ENCODE measurements at regions of chr15 and their contacts with region 1.

Region 1: DNA sequence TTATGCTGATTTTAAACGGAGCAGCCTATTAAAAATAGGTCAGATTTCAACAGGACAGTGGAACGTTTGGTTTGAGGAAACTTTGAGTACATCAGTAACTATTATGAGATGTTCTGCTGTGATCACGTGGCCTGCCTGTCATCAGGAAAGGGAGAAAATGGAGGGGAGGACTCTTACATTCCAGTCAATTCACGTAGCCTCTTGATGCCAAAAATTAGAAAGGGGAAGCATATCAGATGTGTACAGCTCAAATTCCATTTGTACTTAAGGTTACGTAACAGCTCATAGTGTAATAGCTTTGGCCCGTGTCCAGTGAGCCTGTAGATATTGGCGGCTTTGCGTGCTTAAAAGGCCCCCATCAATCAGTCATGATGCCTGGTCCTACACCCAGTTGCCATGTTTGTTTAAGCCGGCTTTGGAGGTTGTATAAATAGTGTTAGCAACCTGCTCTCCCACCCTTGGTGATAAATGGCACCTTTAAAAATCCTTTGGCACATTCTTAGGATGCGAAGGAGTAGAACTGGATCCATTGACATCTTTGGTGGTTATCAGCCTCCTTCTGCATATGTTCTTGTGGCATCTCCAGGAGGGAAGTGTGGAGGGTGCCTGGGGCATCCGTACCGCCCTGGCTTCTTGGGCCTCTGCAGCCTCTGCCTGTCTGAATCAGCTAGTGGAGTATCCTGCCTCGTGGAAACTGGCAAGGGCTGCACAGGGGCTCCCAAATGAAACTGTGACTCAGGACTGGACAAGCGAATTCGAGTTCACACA is 163.9 kb downstream of the THSD4 start:
- DNase-seq: peak; percentile 97
- H3K4me3 ChIP-seq: no peak overlapping the region
- H3K27ac ChIP-seq: peak overlapping the region; percentile 92
- H3K4me1 ChIP-seq: peaks cover 73% of the 10 kb centered on the region
- H3K27me3 ChIP-seq: no peaks in the 10 kb centered on the region
- CTCF ChIP-seq: no peak

Region 2: DNA sequence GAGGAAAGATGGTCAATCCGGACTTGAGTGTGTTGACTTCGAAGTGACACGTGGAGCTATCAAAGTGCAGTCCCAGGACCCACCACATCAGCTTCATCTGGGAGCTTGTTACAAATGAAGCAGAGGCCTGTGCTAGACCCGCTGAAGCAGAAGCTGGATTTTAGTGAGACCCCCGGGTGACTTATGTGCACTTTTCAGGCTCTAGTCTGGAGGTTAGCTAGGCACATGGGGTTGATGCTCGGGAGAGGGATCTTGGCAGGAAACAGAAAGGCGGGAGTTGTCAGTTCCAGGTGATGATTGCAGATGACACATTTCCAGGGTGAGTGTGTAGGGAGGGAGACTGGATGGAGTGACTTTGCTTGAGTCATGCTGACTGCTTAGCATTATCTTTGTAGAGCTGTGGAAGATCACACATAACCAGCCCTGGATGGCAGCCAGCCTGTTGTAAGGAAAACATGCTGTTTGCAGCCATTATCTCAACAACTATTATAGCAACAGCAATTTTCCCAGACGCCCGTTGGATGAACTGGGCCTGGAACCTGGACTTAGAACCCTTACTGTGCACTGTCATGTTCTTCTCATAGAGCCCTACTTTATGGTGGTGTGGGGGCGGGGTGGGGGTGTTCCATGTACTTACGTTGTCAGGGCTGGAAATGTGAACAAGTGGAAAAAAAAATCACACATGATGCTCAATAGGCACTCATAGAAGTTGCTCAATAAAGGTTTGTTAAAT is 41.6 kb before region 1 on chr15:
- CTCF ChIA-PET with region 1: no interaction called
- dilution Hi-C with region 1: no loop called
- in situ Hi-C with region 1: no loop called
- intact Hi-C with region 1: loop called (anchors 5 kb)
- DNase-seq: peak; percentile 96
- H3K4me3 ChIP-seq: no peak overlapping the region
- H3K27ac ChIP-seq: peak overlapping the region; percentile 57
- H3K4me1 ChIP-seq: peaks cover 11% of the 10 kb centered on the region
- H3K27me3 ChIP-seq: no peaks in the 10 kb centered on the region
- CTCF ChIP-seq: no peak

Region 3: GRCh38 chr15:71337207-71337700 is 58.1 kb after region 1 on chr15:
- CTCF ChIA-PET with region 1: no interaction called
- dilution Hi-C with region 1: no loop called
- in situ Hi-C with region 1: no loop called
- intact Hi-C with region 1: loop called (anchors 2 kb)
- DNase-seq: peak; percentile 93
- H3K4me3 ChIP-seq: no peak overlapping the region
- H3K27ac ChIP-seq: peak overlapping the region; percentile 50
- H3K4me1 ChIP-seq: peaks cover 40% of the 10 kb centered on the region
- H3K27me3 ChIP-seq: no peaks in the 10 kb centered on the region
- CTCF ChIP-seq: no peak

Region 4: GRCh38 chr15:71414823-71415222 is 135.7 kb after region 1 on chr15:
- CTCF ChIA-PET with region 1: no interaction called
- dilution Hi-C with region 1: no loop called
- in situ Hi-C with region 1: no loop called
- intact Hi-C with region 1: no loop called
- DNase-seq: no peak
- H3K4me3 ChIP-seq: no peak overlapping the region
- H3K27ac ChIP-seq: no peak overlapping the region
- H3K4me1 ChIP-seq: no peaks in the 10 kb centered on the region
- H3K27me3 ChIP-seq: no peaks in the 10 kb centered on the region
- CTCF ChIP-seq: no peak

Measured in mammary epithelial cell (primary cell).